A673 (cell line): ENCODE measurements at regions of chr10 and their contacts with region 1.

Region 1: DNA sequence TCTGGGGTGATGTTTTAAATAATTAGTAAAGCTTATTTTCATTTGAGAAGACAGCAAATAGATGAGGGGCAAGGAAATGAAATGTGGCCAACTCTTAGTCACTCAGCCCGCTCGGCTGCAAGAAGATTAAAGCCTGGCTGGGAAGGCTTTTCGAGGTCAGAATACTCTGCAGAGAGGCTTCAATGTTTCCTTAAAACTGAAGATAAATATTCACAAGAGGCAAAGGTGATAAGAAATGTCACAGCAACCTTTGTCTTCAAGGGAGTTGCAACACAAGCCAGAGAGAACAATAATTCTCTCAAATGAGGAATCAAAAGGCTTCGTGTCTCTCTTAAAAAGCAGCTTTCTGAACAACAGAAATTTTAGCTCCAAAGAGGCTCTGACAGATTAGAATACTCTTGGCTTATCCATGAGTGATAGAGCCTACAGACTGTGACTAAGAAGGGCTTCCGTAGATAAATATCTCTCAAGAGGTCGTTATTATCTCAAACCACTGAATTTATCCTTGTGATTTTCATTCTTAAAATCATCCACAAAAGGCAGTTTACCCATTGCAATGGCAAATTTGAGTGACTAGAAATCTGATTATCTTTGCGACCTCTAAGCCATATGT is 92.5 kb downstream of the KLF6 start:
- DNase-seq: no peak
- H3K4me3 ChIP-seq: no peak overlapping the region
- H3K27ac ChIP-seq: no peak overlapping the region
- H3K4me1 ChIP-seq: peaks cover 8% of the 10 kb centered on the region
- H3K27me3 ChIP-seq: no peaks in the 10 kb centered on the region
- CTCF ChIP-seq: no peak

Region 2: GRCh38 chr10:3281941-3282673 is 410.4 kb before region 1 on chr10:
- CTCF ChIA-PET with region 1: no interaction called
- POLR2A ChIA-PET with region 1: interaction called, 11 read pairs
- intact Hi-C with region 1: no loop called
- DNase-seq: peak; percentile 40
- H3K4me3 ChIP-seq: no peak overlapping the region
- H3K27ac ChIP-seq: peak overlapping the region; percentile 35
- H3K4me1 ChIP-seq: peaks cover 12% of the 10 kb centered on the region
- H3K27me3 ChIP-seq: no peaks in the 10 kb centered on the region
- CTCF ChIP-seq: no peak

Region 3: GRCh38 chr10:3749600-3749999 is 57.1 kb after region 1 on chr10:
- CTCF ChIA-PET with region 1: no interaction called
- POLR2A ChIA-PET with region 1: no interaction called
- intact Hi-C with region 1: no loop called
- DNase-seq: peak; percentile 41
- H3K4me3 ChIP-seq: no peak overlapping the region
- H3K27ac ChIP-seq: peak overlapping the region; percentile 28
- H3K4me1 ChIP-seq: peaks cover 50% of the 10 kb centered on the region
- H3K27me3 ChIP-seq: no peaks in the 10 kb centered on the region
- CTCF ChIP-seq: no peak